Gastrocnemius medialis (tissue), 4 donors: ENCODE measurements at regions of chr1 and their contacts with region 1.

Region 1: DNA sequence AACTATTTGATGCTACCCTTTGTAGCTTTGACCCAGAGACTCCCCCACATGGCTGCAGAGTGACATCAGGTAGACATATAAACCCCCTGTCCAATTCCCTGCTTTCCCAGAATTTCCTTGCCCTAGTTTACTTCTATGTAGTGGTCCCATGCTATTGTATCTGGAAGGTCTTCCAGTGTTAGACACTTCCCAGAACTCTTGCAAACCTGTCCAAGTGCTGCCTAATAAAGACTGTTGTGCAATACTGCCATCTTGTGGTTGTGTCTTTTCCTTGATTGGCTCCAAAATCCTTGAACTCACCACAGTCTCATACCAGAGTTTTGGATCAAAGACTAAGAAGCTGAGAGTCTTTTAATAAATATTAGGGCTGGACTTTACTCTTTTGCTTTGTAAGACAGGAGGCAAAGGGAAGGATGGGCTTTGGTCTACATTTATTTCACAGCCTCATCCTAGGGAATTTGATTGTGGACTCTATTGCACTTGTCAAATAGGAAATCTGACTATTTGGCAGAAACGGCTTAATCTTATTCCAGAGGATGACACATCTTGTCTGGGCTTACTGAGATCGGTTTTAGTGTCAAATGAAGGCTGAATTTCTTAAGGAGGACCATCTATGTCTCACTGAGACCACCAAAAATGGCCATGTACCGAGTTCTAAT is 169.9 kb downstream of the LRRC7 start:
- DNase-seq: no peak
- ATAC-seq: no peak
- H3K4me3 ChIP-seq: no peak overlapping the region
- H3K27ac ChIP-seq: no peak overlapping the region
- H3K4me1 ChIP-seq: no peaks in the 10 kb centered on the region
- H3K27me3 ChIP-seq: no peaks in the 10 kb centered on the region
- CTCF ChIP-seq: peak; percentile 38 to 67 (median 45)
- POLR2A ChIP-seq: no peak

Region 2: DNA sequence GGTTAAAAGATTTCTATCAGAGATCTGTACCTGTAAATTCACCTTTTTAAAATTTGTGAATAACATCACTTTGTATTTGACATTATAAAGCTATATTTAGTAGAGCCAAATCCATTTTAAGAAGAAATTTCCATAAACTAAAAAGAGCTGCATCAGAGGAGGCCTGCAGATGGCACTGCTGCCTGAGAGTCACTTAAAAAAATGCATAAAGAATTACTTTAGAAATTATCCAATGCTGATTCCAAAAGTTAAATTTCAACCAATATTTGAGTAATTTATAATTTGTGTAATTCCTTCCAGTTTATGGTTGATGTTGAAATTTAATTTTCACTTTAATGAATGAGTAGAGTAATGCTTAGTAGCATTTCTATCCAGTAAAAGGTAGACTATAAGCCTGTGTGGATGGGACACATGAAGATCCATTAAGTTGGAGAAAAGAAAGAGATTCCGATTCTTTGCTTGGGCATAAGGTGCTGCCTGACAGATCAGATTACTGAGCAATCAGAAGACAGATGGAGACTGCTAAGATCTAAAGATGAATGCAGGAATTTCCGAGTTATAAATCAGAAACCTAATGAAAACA is 1267.2 kb before region 1 on chr1:
- in situ Hi-C with region 1: loop called in 1 of 4 experiments (anchors 25 kb)
- intact Hi-C with region 1: no loop called
- DNase-seq: no peak
- ATAC-seq: no peak
- H3K4me3 ChIP-seq: no peak overlapping the region
- H3K27ac ChIP-seq: no peak overlapping the region
- H3K4me1 ChIP-seq: no peaks in the 10 kb centered on the region
- H3K27me3 ChIP-seq: no peaks in the 10 kb centered on the region
- CTCF ChIP-seq: peak in 4 of 5 experiments; percentile 17 to 53 (median 27)
- POLR2A ChIP-seq: no peak

Region 3: GRCh38 chr1:68590473-68590872 is 1147.2 kb before region 1 on chr1:
- in situ Hi-C with region 1: loop called in 1 of 4 experiments (anchors 25 kb)
- intact Hi-C with region 1: no loop called
- DNase-seq: no peak
- ATAC-seq: no peak
- H3K4me3 ChIP-seq: no peak overlapping the region
- H3K27ac ChIP-seq: no peak overlapping the region
- H3K4me1 ChIP-seq: no peaks in the 10 kb centered on the region
- H3K27me3 ChIP-seq: no peaks in the 10 kb centered on the region
- CTCF ChIP-seq: no peak
- POLR2A ChIP-seq: no peak

Region 4: GRCh38 chr1:68600049-68600661 is 1137.5 kb before region 1 on chr1:
- in situ Hi-C with region 1: loop called in 1 of 4 experiments (anchors 25 kb)
- intact Hi-C with region 1: loop called (anchors 2 kb)
- DNase-seq: no peak
- ATAC-seq: no peak
- H3K4me3 ChIP-seq: no peak overlapping the region
- H3K27ac ChIP-seq: no peak overlapping the region
- H3K4me1 ChIP-seq: no peaks in the 10 kb centered on the region
- H3K27me3 ChIP-seq: no peaks in the 10 kb centered on the region
- CTCF ChIP-seq: peak in 3 of 5 experiments; percentile 33 to 56 (median 34)
- POLR2A ChIP-seq: no peak